Activated naive CD4-positive, alpha-beta T cell treated with anti-CD3 and anti-CD28 coated beads for 36 hours (primary cell): ENCODE measurements at regions of chr1 and their contacts with region 1.

Region 1: GRCh38 chr1:198937231-198938031 is 298.6 kb downstream of the PTPRC start:
- DNase-seq: peak; percentile 72
- H3K4me3 Mint-ChIP-seq: peak overlapping the region; percentile 89
- H3K27ac Mint-ChIP-seq: peak overlapping the region; percentile 84
- H3K4me1 Mint-ChIP-seq: peaks cover 21% of the 10 kb centered on the region
- H3K27me3 Mint-ChIP-seq: no peaks in the 10 kb centered on the region

Region 2: DNA sequence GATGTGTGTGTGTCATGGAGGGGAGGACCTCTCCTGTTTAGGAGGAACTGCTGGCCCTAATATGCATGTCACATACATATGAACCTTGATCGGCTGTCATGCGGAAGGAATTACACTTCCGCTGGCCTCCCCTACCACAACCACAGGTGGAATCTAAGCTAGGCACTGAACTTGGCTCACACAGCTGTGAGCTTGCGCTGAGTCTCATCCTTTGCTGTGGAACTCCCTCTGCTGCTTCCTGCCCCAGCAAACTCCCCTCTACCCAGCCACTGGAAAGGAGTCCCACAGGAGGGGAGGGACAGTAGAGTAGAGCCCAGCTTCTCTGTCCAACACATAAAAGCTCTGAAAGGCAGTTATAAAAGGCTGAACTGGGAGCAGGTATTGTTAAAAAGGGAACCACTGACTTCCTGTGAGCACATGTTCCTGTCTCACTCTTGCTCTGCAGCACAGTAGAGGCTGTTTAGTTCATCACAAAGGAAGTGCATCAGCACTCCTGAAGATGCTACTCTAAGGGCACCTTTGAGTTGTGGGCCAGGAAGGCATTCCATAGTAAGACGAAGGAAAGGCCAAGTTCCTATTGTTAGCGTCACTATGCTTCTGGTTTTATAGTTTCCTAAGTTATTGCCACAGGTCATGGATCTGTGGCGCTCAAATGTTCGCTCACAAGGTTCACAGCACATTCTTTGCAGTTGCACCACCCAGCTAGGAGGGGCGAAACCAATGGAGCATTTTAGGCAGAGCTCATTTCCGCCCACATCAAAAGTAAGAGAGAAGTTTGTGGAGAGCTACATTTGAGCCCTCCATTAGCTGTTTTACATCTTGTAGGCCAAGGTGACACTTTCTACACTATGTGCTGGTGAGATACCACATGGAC is 316.2 kb before region 1 on chr1:
- CTCF ChIA-PET with region 1: no interaction called
- intact Hi-C with region 1: loop called (anchors 5 kb)
- DNase-seq: peak; percentile 77
- H3K4me3 Mint-ChIP-seq: peak overlapping the region; percentile 82
- H3K27ac Mint-ChIP-seq: peak overlapping the region; percentile 100
- H3K4me1 Mint-ChIP-seq: peaks cover 86% of the 10 kb centered on the region
- H3K27me3 Mint-ChIP-seq: no peaks in the 10 kb centered on the region

Region 3: DNA sequence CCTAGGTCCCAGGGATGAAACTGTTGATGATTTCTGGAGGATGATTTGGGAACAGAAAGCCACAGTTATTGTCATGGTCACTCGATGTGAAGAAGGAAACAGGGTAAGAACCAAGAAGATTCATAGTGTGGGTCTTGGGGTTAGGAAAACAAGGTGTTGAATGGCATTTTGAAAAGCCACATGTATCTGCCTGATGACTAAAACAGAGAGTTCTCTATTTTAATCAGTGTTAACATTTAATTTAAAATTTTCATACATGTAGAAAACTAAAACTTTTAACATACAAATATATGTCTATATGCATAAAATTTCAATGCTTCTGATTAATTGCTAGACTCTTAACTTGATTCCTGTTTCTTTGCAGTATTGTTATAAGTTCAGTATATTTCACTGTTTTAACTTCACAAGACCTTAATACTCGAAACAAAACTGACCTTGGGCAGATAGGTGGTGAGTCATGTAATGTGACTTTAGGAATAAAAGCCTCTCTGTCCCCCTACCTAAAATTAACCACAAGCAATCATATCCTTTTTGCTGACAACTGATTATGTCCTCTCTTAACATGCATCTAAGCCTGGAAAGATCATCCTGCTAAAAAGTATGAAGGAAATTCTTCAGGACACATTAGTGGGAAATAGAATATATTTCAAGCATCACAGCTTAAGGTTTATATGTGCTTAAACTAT is 203.0 kb before region 1 on chr1:
- CTCF ChIA-PET with region 1: no interaction called
- intact Hi-C with region 1: loop called (anchors 5 kb)
- DNase-seq: no peak
- H3K4me3 Mint-ChIP-seq: no peak overlapping the region
- H3K27ac Mint-ChIP-seq: peak overlapping the region; percentile 78
- H3K4me1 Mint-ChIP-seq: peaks cover 72% of the 10 kb centered on the region
- H3K27me3 Mint-ChIP-seq: no peaks in the 10 kb centered on the region

Region 4: DNA sequence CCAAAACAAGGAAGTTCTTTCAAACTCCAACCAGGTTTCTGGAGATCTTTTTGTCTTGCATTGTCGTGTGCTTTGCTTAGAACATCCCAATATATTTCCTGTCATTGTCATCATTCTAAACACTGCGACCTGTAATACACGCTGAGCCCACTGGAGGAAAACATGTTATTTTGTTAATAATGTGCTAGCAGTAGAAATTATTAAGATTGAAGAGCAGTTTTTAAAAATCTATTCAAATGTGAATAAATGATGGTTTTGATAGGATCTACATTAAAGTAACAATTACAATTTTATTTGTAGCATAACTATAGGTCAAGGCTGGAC is 30.0 kb before region 1 on chr1:
- CTCF ChIA-PET with region 1: no interaction called
- intact Hi-C with region 1: loop called (anchors 1 kb)
- DNase-seq: no peak
- H3K4me3 Mint-ChIP-seq: peak overlapping the region; percentile 20
- H3K27ac Mint-ChIP-seq: no peak overlapping the region
- H3K4me1 Mint-ChIP-seq: peaks cover 34% of the 10 kb centered on the region
- H3K27me3 Mint-ChIP-seq: no peaks in the 10 kb centered on the region

Region 5: DNA sequence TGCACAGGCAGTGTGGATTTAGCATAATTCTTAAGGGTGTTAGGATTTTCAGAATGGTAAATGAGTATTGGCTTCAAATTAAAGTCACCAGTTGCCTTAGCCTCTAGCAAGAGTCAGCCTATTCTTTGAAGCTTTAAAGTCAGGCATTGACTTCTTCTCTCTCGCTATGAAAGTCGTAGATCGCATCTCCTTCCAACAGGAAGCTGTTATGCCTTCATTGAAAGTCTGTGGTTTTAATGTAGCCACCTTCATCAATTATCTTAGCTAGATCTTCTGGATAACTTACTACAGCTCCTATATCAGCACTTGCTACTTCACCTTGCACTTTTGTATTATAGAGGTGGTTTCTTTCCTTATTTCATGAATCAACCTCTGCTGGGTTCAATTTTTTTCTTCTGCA is 21.6 kb after region 1 on chr1:
- CTCF ChIA-PET with region 1: no interaction called
- intact Hi-C with region 1: loop called (anchors 1 kb)
- DNase-seq: no peak
- H3K4me3 Mint-ChIP-seq: no peak overlapping the region
- H3K27ac Mint-ChIP-seq: peak overlapping the region; percentile 10
- H3K4me1 Mint-ChIP-seq: peaks cover 24% of the 10 kb centered on the region
- H3K27me3 Mint-ChIP-seq: no peaks in the 10 kb centered on the region

Region 6: DNA sequence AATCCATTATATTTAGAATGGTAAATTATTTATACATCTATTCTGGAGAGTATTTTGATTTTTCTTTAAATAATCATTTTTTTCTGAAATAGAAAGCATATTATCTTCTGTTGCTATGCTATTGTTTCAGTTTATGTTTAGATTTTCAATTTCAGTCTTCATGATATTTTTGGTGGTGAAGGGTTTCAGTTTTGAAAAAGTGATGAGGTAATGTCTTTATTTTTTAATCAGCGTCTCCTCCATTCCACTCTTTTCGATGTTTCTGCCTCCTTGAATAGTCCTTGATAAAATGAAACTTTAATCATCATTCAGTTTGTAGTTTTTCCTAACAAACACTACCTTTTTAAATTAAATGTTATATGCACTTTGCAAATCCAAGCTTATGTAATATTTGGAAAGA is 130.1 kb after region 1 on chr1:
- CTCF ChIA-PET with region 1: no interaction called
- intact Hi-C with region 1: no loop called
- DNase-seq: no peak
- H3K4me3 Mint-ChIP-seq: no peak overlapping the region
- H3K27ac Mint-ChIP-seq: no peak overlapping the region
- H3K4me1 Mint-ChIP-seq: peaks cover 3% of the 10 kb centered on the region
- H3K27me3 Mint-ChIP-seq: no peaks in the 10 kb centered on the region

Region 7: GRCh38 chr1:199113265-199113869 is 175.9 kb after region 1 on chr1:
- CTCF ChIA-PET with region 1: interaction called, 14 read pairs
- intact Hi-C with region 1: no loop called
- DNase-seq: peak; percentile 87
- H3K4me3 Mint-ChIP-seq: no peak overlapping the region
- H3K27ac Mint-ChIP-seq: no peak overlapping the region
- H3K4me1 Mint-ChIP-seq: no peaks in the 10 kb centered on the region
- H3K27me3 Mint-ChIP-seq: no peaks in the 10 kb centered on the region

Region 8: GRCh38 chr1:199243423-199244061 is 306.1 kb after region 1 on chr1:
- CTCF ChIA-PET with region 1: interaction called, 3 read pairs
- intact Hi-C with region 1: loop called (anchors 5 kb)
- DNase-seq: peak; percentile 86
- H3K4me3 Mint-ChIP-seq: no peak overlapping the region
- H3K27ac Mint-ChIP-seq: no peak overlapping the region
- H3K4me1 Mint-ChIP-seq: no peaks in the 10 kb centered on the region
- H3K27me3 Mint-ChIP-seq: peaks cover 9% of the 10 kb centered on the region

Region 9: DNA sequence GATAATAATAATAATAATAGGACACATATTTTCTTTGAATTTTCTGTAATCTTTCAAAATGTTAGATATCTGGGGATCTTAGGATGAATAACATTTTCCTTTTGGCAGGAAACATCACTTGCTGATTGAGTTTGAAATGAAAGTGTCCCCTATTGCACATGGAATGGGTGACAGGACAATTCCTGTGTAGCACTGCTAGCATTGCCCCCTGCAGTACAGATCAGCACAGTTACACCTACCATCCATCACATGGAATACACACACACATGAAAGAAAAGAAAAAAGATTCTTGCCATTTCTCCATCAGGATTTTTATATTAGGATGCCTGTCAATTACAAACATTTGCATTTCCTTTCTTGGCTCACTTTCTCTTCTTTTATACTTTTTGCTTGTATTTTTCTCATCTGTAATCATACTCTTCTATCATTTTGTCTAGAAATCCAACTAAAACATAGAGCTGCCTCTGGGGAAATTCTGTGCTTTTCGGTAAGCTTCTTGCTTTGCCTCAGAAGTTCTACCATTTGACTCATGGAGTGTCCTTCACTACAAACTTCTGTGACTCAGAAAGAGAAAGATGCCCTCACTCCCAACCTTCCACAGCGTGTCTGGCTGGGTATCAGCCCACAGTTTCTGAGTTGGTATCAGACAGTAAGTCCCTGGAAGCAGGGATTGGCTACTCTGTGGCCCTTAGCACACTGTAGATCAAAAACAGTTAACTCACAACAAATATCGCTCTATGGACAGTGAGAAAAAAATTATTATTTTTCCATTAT is 342.6 kb after region 1 on chr1:
- CTCF ChIA-PET with region 1: no interaction called
- intact Hi-C with region 1: no loop called
- DNase-seq: no peak
- H3K4me3 Mint-ChIP-seq: no peak overlapping the region
- H3K27ac Mint-ChIP-seq: no peak overlapping the region
- H3K4me1 Mint-ChIP-seq: no peaks in the 10 kb centered on the region
- H3K27me3 Mint-ChIP-seq: no peaks in the 10 kb centered on the region